Aorta (tissue), 5 donors: ENCODE measurements at regions of chr17 and their contacts with region 1.

Region 1: GRCh38 chr17:4366327-4367063 is at the start of gene UBE2G1:
- DNase-seq: peak; percentile 99
- ATAC-seq: peak; percentile 97
- H3K4me3 ChIP-seq: peak within 1 kb of the TSS; percentile 88 to 90
- H3K27ac ChIP-seq: peak within 1 kb of the TSS; percentile 59 to 85
- H3K4me1 ChIP-seq: peaks cover 0 to 2% of the 10 kb centered on the region in 2 donors
- H3K27me3 ChIP-seq: no peaks in the 10 kb centered on the region
- total RNA-seq, gene UBE2G1: 48.3 TPM

Region 2: GRCh38 chr17:4199818-4200402 is 166.6 kb before region 1 on chr17:
- intact Hi-C with region 1: loop called in 1 of 2 experiments (anchors 5 kb)
- DNase-seq: no peak
- ATAC-seq: no peak
- H3K4me3 ChIP-seq: no peak overlapping the region
- H3K27ac ChIP-seq: no peak overlapping the region
- H3K4me1 ChIP-seq: peaks cover 0 to 9% of the 10 kb centered on the region in 2 donors
- H3K27me3 ChIP-seq: no peaks in the 10 kb centered on the region

Region 3: GRCh38 chr17:4304417-4305027 is 62.0 kb before region 1 on chr17:
- intact Hi-C with region 1: loop called in 1 of 2 experiments (anchors 10 kb)
- DNase-seq: peak in 1 of 2 donors; percentile 47
- ATAC-seq: peak; percentile 70
- H3K4me3 ChIP-seq: no peak overlapping the region
- H3K27ac ChIP-seq: no peak overlapping the region
- H3K4me1 ChIP-seq: no peaks in the 10 kb centered on the region
- H3K27me3 ChIP-seq: no peaks in the 10 kb centered on the region

Region 4: DNA sequence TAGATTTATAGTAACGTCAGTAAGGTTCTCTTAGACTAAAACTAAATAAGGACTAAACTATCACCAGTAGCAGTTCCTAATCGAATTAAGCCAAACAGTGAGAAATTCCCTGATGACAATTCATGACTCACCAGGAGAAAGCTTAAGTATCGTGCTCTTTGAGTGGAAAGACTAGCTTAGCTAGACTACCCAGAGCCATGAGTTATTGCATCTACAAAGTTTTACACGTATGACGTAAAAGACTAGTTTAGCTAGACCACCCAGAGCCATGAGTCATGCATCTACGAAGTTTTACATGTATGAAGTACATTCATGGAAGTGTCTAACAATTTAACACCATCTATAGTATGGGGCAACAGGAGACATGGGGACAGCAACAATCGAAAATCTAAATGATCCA is 36.7 kb before region 1 on chr17:
- intact Hi-C with region 1: loop called in 1 of 2 experiments (anchors 2 kb)
- DNase-seq: no peak
- ATAC-seq: no peak
- H3K4me3 ChIP-seq: no peak overlapping the region
- H3K27ac ChIP-seq: no peak overlapping the region
- H3K4me1 ChIP-seq: peaks cover 4 to 5% of the 10 kb centered on the region in 2 donors
- H3K27me3 ChIP-seq: no peaks in the 10 kb centered on the region